ENCODE measurements at regions of chr9 and their contacts with region 1.

Region 1: DNA sequence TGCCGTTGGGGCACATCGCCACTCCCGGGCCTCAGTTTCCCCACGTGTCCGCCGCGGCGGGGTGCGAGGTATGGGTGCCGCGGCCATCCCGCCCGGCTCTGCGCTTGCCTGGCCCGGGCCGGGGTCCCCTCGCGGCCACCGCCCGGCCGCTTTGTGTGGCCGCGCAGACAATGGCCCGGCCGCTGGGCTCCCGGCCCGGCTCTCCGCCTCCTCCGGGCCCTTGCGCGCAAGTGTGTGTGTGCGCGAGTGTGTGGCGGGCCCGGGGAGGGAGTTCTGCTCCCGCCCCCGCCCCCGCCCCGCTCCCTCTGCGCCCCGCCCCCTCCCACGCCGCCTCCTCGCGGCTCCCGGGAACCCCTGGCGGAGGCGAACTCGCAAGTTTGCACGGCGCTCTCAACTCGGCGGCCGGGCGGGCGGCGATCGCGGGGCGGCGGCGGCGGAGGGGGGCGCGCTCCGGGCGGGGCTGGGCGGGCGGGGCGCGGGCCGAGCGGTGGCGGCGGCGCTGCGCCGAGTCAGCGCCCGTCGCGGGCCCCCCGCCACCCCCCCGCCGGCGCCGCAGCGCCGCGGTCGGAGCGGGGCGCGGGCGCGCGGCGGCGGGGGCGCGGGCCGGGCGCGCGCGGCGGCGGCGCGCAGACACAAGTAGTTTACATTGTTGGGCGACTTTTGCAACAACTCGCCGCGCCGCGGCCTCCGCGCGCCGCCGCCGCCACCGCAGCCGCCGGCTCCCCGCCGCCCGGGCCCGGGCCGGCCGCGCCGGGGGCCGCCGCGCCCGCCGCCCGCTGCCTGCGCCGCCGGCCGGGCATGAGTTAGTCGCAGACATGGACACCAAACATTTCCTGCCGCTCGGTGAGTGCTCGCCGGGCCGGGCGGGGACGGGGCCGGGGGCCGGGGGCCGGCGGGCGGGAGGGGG is at the start of gene RXRA:
- DNase-seq: no peak
- H3K4me3 Mint-ChIP-seq: peak within 1 kb of the TSS; percentile 59
- H3K27ac Mint-ChIP-seq: no peak within 1 kb of the TSS
- H3K4me1 Mint-ChIP-seq: peaks cover 6% of the 10 kb centered on the region
- H3K27me3 Mint-ChIP-seq: peaks cover 30% of the 10 kb centered on the region
- total RNA-seq, gene RXRA: 0.71 and 0.91 TPM in 2 replicates

Region 2: GRCh38 chr9:134171316-134172197 is 154.5 kb before region 1 on chr9:
- intact Hi-C with region 1: loop called (anchors 5 kb)
- DNase-seq: no peak
- H3K4me3 Mint-ChIP-seq: no peak overlapping the region
- H3K27ac Mint-ChIP-seq: no peak overlapping the region
- H3K4me1 Mint-ChIP-seq: no peaks in the 10 kb centered on the region
- H3K27me3 Mint-ChIP-seq: no peaks in the 10 kb centered on the region

Region 3: DNA sequence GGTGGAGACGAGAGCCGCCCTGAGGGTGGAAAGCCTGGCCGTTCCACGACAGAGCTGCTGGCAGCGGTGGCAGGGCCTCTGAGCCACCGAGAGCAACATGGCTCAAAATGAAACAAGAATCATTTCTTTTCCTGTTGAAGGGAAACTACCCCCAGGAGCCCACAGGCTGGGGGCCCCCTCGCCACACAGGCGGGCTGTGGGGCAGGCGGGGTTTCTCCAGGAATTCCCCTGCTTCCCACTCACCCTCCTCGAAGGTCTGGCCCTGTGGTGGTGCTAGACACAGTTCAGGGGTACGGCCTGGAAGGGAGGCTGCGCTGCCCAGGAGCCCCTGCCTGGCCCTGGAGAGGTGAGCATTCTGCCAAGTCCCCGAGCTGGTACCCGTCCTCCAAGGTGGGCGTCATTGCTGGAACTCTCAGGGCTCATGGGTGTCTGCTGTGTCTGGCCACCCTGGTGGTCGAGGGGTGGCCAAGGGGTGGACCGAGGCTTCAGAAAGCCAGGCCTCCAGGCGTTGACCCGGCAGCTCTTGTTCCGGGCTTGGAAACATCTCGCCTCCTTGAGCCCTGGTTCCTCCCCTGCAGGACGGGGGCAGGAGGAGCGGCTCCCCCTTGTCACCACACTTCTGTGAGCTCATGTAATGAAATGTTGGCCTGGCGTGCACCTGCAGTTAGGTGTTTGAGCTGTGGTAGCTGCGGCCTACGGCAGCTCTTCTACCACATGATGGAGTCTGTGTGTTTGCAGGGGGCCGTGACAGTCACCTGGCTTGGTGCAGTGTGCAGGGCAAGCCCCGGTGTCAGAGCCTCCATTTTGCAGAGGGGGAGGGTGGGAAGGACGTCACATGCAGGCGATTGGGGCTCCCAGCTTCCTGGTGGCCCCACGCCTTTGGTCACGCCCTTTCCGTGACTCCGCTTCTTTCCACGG is 65.5 kb after region 1 on chr9:
- intact Hi-C with region 1: loop called (anchors 5 kb)
- DNase-seq: peak; percentile 59
- H3K4me3 Mint-ChIP-seq: peak overlapping the region; percentile 51
- H3K27ac Mint-ChIP-seq: peak overlapping the region; percentile 82
- H3K4me1 Mint-ChIP-seq: peaks cover 38% of the 10 kb centered on the region
- H3K27me3 Mint-ChIP-seq: peaks cover 33% of the 10 kb centered on the region

Region 4: DNA sequence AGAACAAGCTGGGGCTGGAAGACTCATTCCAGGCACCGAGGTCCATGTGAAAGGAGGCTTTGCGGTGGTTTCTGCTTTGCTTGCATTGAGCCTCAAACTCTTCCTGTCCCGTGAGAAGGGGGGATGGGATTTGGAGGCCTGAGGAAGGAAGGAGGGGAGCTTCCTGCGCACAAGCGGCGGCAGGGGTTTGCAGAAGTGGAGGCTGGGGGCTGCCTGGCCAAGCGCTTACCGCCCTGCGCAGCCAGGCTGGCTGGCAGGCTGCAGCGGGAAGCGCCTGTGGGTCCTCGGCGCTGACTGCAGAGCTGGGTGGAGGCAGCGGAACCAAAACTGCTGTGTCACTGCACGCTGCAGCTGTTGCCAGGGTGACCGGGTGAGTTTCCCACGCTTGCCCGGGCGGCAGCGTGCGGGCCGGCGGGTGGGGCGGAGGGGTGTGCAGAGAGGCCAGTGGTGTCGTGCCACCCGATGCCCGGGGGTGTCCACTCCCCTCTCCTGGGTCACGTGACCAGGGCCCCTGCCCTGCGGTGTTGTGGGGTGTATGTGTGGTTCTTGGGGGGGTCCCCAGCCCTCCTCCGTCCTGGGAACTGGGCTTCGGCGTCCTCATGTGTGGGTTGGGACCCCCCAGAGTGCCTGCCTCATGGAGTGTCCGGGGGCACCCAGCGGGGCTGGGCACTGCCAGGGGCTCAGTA is 81.2 kb after region 1 on chr9:
- intact Hi-C with region 1: loop called (anchors 2 kb)
- DNase-seq: peak; percentile 73
- H3K4me3 Mint-ChIP-seq: peak overlapping the region; percentile 65
- H3K27ac Mint-ChIP-seq: peak overlapping the region; percentile 83
- H3K4me1 Mint-ChIP-seq: peaks cover 29% of the 10 kb centered on the region
- H3K27me3 Mint-ChIP-seq: peaks cover 8% of the 10 kb centered on the region

Region 5: DNA sequence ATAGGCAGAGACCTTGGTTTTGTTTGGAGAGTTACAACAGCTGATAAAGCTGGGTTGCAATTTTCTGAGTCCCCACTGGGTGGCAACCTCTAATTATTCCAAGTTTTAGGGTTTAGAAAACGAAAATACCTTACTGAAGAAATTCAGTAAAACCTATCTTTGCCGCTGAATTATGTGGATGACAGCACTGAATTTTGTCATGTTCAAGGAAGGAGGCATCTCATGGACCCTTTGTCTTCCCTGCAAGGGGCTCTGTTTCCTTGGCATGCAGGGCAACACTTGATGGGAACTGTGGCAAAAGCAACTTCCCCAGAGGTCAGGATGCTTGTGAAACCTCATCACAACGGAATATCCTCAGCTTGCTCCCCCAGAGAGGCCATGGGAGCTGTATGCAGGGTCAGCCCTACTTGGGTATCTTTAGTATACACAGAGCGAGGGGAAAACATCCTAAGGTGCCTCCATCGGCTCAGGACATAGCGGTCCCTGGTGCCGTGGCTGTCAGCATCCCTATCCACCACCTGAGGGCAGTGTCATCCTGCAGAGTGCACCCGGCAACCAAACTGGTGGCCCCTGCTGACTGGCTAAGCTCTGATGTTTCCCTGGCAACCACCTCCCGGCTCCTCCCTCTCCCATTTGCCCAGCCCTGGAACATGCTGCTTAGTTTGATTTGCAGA is 123.3 kb after region 1 on chr9:
- intact Hi-C with region 1: loop called (anchors 10 kb)
- DNase-seq: peak; percentile 55
- H3K4me3 Mint-ChIP-seq: no peak overlapping the region
- H3K27ac Mint-ChIP-seq: no peak overlapping the region
- H3K4me1 Mint-ChIP-seq: no peaks in the 10 kb centered on the region
- H3K27me3 Mint-ChIP-seq: peaks cover 2% of the 10 kb centered on the region

Region 6: GRCh38 chr9:134571946-134572915 is 246.2 kb after region 1 on chr9:
- intact Hi-C with region 1: no loop called
- DNase-seq: no peak
- H3K4me3 Mint-ChIP-seq: no peak overlapping the region
- H3K27ac Mint-ChIP-seq: no peak overlapping the region
- H3K4me1 Mint-ChIP-seq: no peaks in the 10 kb centered on the region
- H3K27me3 Mint-ChIP-seq: no peaks in the 10 kb centered on the region

Measured in activated T-helper 1 cell treated with anti-CD3 and anti-CD28 coated beads, Interleukin-12 subunit alpha, Interleukin-12 subunit beta, Interleukin-2, Interleukin-4 antibody, amounts not matched to agents 30 ng/mL and 10 ng/mL and 1 ng/mL, durations not matched to agents 14 hours and 24 hours and 36 hours (primary cell).